CD14-positive monocyte (primary cell): ENCODE measurements at regions of chr1 and their contacts with region 1.

Region 1: GRCh38 chr1:26999440-26999987 is 6.0 kb downstream of the TRNP1 start:
- DNase-seq: no peak
- H3K4me3 ChIP-seq: no peak overlapping the region
- H3K4me3 Mint-ChIP-seq: no peak overlapping the region
- H3K27ac ChIP-seq: no peak overlapping the region
- H3K27ac Mint-ChIP-seq: peak overlapping the region in 6 of 7 donors; percentile 64 to 97 (median 76)
- H3K4me1 ChIP-seq: peaks cover 45 to 61% of the 10 kb centered on the region in 2 donors
- H3K4me1 Mint-ChIP-seq: peaks cover 60% of the 10 kb centered on the region
- H3K27me3 ChIP-seq: peaks cover 15 to 23% of the 10 kb centered on the region in 2 donors
- H3K27me3 Mint-ChIP-seq: peaks cover 25 to 30% (median 29%) of the 10 kb centered on the region in 3 donors
- CTCF ChIP-seq: no peak

Region 2: GRCh38 chr1:26799479-26800142 is 199.9 kb before region 1 on chr1:
- intact Hi-C with region 1: no loop called
- DNase-seq: no peak
- H3K4me3 ChIP-seq: no peak overlapping the region
- H3K4me3 Mint-ChIP-seq: no peak overlapping the region
- H3K27ac ChIP-seq: no peak overlapping the region
- H3K27ac Mint-ChIP-seq: peak overlapping the region in 4 of 7 donors; percentile 2 to 45 (median 12)
- H3K4me1 ChIP-seq: no peaks in the 10 kb centered on the region
- H3K4me1 Mint-ChIP-seq: no peaks in the 10 kb centered on the region
- H3K27me3 ChIP-seq: no peaks in the 10 kb centered on the region
- H3K27me3 Mint-ChIP-seq: peaks cover 0 to 1% (median 0%) of the 10 kb centered on the region in 3 donors
- CTCF ChIP-seq: no peak

Region 3: DNA sequence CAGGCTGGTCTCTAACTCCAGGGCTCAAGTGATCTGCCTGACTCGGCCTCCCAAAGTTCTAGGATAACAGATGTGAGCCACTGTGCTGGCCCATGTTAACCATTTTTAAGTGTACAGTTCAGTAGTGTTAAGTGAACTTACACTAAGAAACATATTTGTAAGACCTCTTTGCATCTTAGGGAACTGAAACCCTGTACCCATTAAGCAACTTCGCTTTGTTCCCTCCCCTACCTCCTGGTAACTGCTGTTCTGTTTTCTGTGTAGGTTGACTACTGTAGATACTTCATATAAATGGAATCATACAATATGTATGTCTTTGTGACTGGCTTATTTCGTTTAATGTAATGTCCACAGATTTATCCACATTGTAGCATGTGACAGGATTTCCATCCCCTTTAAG is 67.0 kb before region 1 on chr1:
- intact Hi-C with region 1: loop called in 1 of 2 experiments (anchors 5 kb)
- DNase-seq: peak; percentile 76 to 87 (median 78)
- H3K4me3 ChIP-seq: no peak overlapping the region
- H3K4me3 Mint-ChIP-seq: no peak overlapping the region
- H3K27ac ChIP-seq: peak overlapping the region; percentile 56 to 57
- H3K27ac Mint-ChIP-seq: peak overlapping the region; percentile 53 to 91 (median 84)
- H3K4me1 ChIP-seq: peaks cover 17 to 18% of the 10 kb centered on the region in 2 donors
- H3K4me1 Mint-ChIP-seq: peaks cover 14% of the 10 kb centered on the region
- H3K27me3 ChIP-seq: no peaks in the 10 kb centered on the region
- H3K27me3 Mint-ChIP-seq: no peaks in the 10 kb centered on the region
- CTCF ChIP-seq: no peak

Region 4: DNA sequence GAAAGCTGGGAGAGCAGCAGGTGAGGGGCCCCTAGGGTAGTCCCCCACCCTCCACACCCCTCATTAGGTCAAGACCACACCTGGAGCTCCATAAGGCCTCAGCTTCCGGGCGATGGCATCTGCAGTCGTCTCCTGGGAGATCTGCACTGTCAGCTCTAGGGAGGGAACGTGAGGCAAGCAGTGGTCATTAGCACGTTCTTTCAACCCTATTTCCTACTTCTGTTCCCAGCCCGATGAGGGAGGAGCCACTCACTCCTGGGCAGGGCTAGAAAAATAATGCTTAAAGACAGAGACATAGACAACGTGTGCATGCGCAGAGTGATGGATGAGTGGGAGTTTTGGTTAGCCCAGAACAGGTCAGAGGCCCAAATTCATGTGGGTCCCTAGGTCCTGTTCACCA is 48.9 kb before region 1 on chr1:
- intact Hi-C with region 1: no loop called
- DNase-seq: no peak
- H3K4me3 ChIP-seq: no peak overlapping the region
- H3K4me3 Mint-ChIP-seq: no peak overlapping the region
- H3K27ac ChIP-seq: no peak overlapping the region
- H3K27ac Mint-ChIP-seq: no peak overlapping the region
- H3K4me1 ChIP-seq: no peaks in the 10 kb centered on the region
- H3K4me1 Mint-ChIP-seq: no peaks in the 10 kb centered on the region
- H3K27me3 ChIP-seq: no peaks in the 10 kb centered on the region
- H3K27me3 Mint-ChIP-seq: peaks cover 3 to 11% (median 3%) of the 10 kb centered on the region in 3 donors
- CTCF ChIP-seq: no peak

Region 5: GRCh38 chr1:26961826-26962225 is 37.7 kb before region 1 on chr1:
- intact Hi-C with region 1: loop called in 1 of 2 experiments (anchors 1 kb)
- DNase-seq: no peak
- H3K4me3 ChIP-seq: no peak overlapping the region
- H3K4me3 Mint-ChIP-seq: peak overlapping the region in 1 of 2 donors; percentile 22
- H3K27ac ChIP-seq: no peak overlapping the region
- H3K27ac Mint-ChIP-seq: no peak overlapping the region
- H3K4me1 ChIP-seq: peaks cover 7 to 14% of the 10 kb centered on the region in 2 donors
- H3K4me1 Mint-ChIP-seq: peaks cover 18% of the 10 kb centered on the region
- H3K27me3 ChIP-seq: peaks cover 33 to 42% of the 10 kb centered on the region in 2 donors
- H3K27me3 Mint-ChIP-seq: peaks cover 46 to 61% (median 51%) of the 10 kb centered on the region in 3 donors
- CTCF ChIP-seq: no peak

Region 6: GRCh38 chr1:27011976-27012563 is 12.6 kb after region 1 on chr1:
- intact Hi-C with region 1: loop called (anchors 2 kb)
- DNase-seq: no peak
- H3K4me3 ChIP-seq: peak overlapping the region in 1 of 3 experiments; percentile 69
- H3K4me3 Mint-ChIP-seq: peak overlapping the region; percentile 9 to 46
- H3K27ac ChIP-seq: no peak overlapping the region
- H3K27ac Mint-ChIP-seq: peak overlapping the region in 2 of 7 donors; percentile 20 to 46
- H3K4me1 ChIP-seq: peaks cover 16 to 27% of the 10 kb centered on the region in 2 donors
- H3K4me1 Mint-ChIP-seq: peaks cover 20% of the 10 kb centered on the region
- H3K27me3 ChIP-seq: peaks cover 0 to 11% of the 10 kb centered on the region in 2 donors
- H3K27me3 Mint-ChIP-seq: peaks cover 6 to 15% (median 14%) of the 10 kb centered on the region in 3 donors
- CTCF ChIP-seq: no peak

Region 7: GRCh38 chr1:27031235-27032118 is 32.0 kb after region 1 on chr1:
- intact Hi-C with region 1: loop called in 1 of 2 experiments (anchors 5 kb)
- DNase-seq: peak; percentile 30 to 49 (median 49)
- H3K4me3 ChIP-seq: peak overlapping the region; percentile 20 to 70 (median 23)
- H3K4me3 Mint-ChIP-seq: peak overlapping the region; percentile 64 to 68
- H3K27ac ChIP-seq: no peak overlapping the region
- H3K27ac Mint-ChIP-seq: peak overlapping the region in 1 of 7 donors; percentile 13
- H3K4me1 ChIP-seq: peaks cover 9 to 10% of the 10 kb centered on the region in 2 donors
- H3K4me1 Mint-ChIP-seq: peaks cover 10% of the 10 kb centered on the region
- H3K27me3 ChIP-seq: no peaks in the 10 kb centered on the region
- H3K27me3 Mint-ChIP-seq: peaks cover 0 to 11% (median 2%) of the 10 kb centered on the region in 3 donors
- CTCF ChIP-seq: no peak

Region 8: DNA sequence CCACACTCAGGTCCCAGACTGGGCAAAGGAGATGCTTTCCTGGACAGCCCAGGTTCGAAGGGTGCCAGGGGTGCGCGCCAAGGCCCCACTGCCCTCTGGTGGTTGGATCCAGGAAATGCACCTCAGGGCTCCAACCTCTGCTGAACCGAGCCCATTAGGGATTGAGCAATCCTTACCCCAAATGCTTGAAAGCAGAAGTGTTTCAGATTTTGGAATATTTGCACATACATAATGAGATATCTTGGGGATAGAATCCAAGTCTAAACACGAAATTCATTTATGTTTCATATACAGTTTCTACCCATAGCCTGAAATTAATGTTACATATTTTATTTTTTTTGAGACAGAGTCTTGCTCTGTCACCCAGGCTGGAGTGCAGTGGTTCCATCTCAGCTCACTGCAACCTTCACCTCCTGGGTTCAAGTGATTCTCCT is 98.0 kb after region 1 on chr1:
- intact Hi-C with region 1: loop called (anchors 2 to 5 kb)
- DNase-seq: peak; percentile 90 to 92 (median 92)
- H3K4me3 ChIP-seq: no peak overlapping the region
- H3K4me3 Mint-ChIP-seq: peak overlapping the region in 1 of 2 donors; percentile 35
- H3K27ac ChIP-seq: peak overlapping the region; percentile 85 to 88
- H3K27ac Mint-ChIP-seq: peak overlapping the region; percentile 74 to 98 (median 97)
- H3K4me1 ChIP-seq: peaks cover 36 to 48% of the 10 kb centered on the region in 2 donors
- H3K4me1 Mint-ChIP-seq: peaks cover 48% of the 10 kb centered on the region
- H3K27me3 ChIP-seq: no peaks in the 10 kb centered on the region
- H3K27me3 Mint-ChIP-seq: peaks cover 0 to 7% (median 1%) of the 10 kb centered on the region in 3 donors
- CTCF ChIP-seq: peak; percentile 98

Region 9: GRCh38 chr1:27634177-27634984 is 634.9 kb after region 1 on chr1:
- intact Hi-C with region 1: loop called in 1 of 2 experiments (anchors 5 kb)
- DNase-seq: peak; percentile 61 to 72 (median 66)
- H3K4me3 ChIP-seq: peak overlapping the region; percentile 81 to 100 (median 84)
- H3K4me3 Mint-ChIP-seq: peak overlapping the region; percentile 94 to 96
- H3K27ac ChIP-seq: peak overlapping the region; percentile 96 to 98
- H3K27ac Mint-ChIP-seq: peak overlapping the region in 6 of 7 donors; percentile 98 to 100 (median 99)
- H3K4me1 ChIP-seq: peaks cover 70 to 80% of the 10 kb centered on the region in 2 donors
- H3K4me1 Mint-ChIP-seq: peaks cover 68% of the 10 kb centered on the region
- H3K27me3 ChIP-seq: no peaks in the 10 kb centered on the region
- H3K27me3 Mint-ChIP-seq: peaks cover 0 to 2% (median 0%) of the 10 kb centered on the region in 3 donors
- CTCF ChIP-seq: no peak